Activated CD8-positive, alpha-beta memory T cell treated with anti-CD3 and anti-CD28 coated beads, Interleukin-2, amount 10 ng/mL, durations not matched to agents 7 days and 5 days (primary cell): ENCODE measurements at regions of chr22 and their contacts with region 1.

Region 1: DNA sequence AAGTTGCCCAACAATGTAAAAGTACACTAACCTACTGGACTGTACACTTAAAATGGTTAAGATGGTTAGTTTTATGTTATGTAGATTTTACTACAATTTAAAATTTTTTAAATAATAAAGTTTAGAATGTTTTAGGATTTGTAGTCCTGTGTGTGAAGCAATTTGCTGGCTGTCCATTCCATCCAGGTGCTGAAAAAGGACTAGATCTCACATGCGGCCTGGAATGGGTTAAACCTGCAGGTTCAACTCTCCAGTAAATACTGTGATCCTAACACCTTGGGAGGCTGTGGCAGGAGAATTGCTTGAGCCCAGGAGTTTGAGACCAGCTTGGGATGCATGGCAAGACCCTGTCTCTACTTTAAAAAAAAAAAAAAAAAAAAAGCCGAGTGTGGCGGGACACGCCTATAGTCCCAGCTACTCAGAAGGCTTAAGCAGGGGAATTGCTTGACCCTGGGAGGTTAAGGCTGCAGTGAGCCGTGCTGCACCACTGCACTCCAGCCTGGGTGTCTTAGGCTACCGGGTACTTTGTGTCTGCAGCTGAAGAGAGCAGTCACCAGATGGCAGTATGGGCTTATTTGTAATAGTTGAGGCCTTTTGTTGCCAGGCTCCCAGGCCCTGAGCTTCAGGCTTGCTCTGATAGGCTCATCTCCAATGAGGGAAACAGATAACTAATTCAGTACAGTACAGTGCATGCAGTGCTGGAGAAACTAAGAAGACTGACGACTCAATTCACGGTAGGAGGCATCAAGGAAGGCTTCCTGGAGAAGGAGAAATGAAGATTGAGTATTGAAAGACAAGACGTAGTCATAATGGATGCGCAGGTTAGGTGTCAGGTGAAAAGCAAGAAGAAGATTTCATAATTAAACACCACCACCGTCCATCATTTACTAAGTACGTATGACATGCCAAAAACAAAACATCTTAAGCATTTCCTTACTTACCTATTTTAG is 64.7 kb upstream of the ASPHD2 start:
- DNase-seq: peak; percentile 76
- ATAC-seq: peak; percentile 86
- H3K4me3 Mint-ChIP-seq: no peak overlapping the region
- H3K27ac Mint-ChIP-seq: no peak overlapping the region
- H3K4me1 Mint-ChIP-seq: peaks cover 2% of the 10 kb centered on the region
- H3K27me3 Mint-ChIP-seq: peaks cover 14% of the 10 kb centered on the region

Region 2: DNA sequence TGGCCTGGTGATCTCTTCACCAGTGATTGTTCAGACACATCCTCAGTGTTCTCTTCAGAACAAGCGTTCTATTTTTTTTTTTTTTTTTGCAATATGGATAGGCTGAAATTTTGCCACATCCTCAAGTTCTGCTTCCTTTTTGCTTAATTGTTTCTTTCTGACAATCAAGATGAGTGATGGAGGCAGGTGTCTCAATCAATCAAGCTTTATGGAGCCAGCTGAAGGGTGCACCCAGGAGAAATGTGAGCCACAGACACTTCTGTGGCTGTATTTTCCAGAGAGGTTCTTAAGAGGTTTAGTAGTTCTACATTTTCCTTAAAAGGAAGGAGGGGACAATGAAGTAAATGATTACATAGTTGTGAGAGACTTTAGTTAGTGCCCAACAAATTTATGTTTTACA is 20.8 kb after region 1 on chr22:
- CTCF ChIA-PET with region 1: interaction called, 89 read pairs
- DNase-seq: no peak
- ATAC-seq: no peak
- H3K4me3 Mint-ChIP-seq: no peak overlapping the region
- H3K27ac Mint-ChIP-seq: no peak overlapping the region
- H3K4me1 Mint-ChIP-seq: no peaks in the 10 kb centered on the region
- H3K27me3 Mint-ChIP-seq: peaks cover 71% of the 10 kb centered on the region

Region 3: GRCh38 chr22:26398741-26399153 is 34.4 kb after region 1 on chr22:
- CTCF ChIA-PET with region 1: interaction called, 14 read pairs
- DNase-seq: peak; percentile 72
- ATAC-seq: peak; percentile 78
- H3K4me3 Mint-ChIP-seq: no peak overlapping the region
- H3K27ac Mint-ChIP-seq: no peak overlapping the region
- H3K4me1 Mint-ChIP-seq: peaks cover 5% of the 10 kb centered on the region
- H3K27me3 Mint-ChIP-seq: peaks cover 8% of the 10 kb centered on the region